Tibial artery (tissue), 4 donors: ENCODE measurements at regions of chr18 and their contacts with region 1.

Region 1: GRCh38 chr18:42901161-42901560 is 214.3 kb downstream of the RIT2 start:
- DNase-seq: no peak
- H3K4me3 ChIP-seq: no peak overlapping the region
- H3K27ac ChIP-seq: no peak overlapping the region
- H3K4me1 ChIP-seq: no peaks in the 10 kb centered on the region
- H3K27me3 ChIP-seq: no peaks in the 10 kb centered on the region
- CTCF ChIP-seq: no peak

Region 2: GRCh38 chr18:42976869-42977590 is 75.9 kb after region 1 on chr18:
- intact Hi-C with region 1: loop called (anchors 2 kb)
- DNase-seq: no peak
- H3K4me3 ChIP-seq: no peak overlapping the region
- H3K27ac ChIP-seq: no peak overlapping the region
- H3K4me1 ChIP-seq: no peaks in the 10 kb centered on the region
- H3K27me3 ChIP-seq: no peaks in the 10 kb centered on the region
- CTCF ChIP-seq: no peak